CD8-positive, alpha-beta memory T cell (primary cell): ENCODE measurements at regions of chr16 and their contacts with region 1.

Region 1: GRCh38 chr16:28277537-28278388 is 14.6 kb upstream of the SBK1 start:
- DNase-seq: peak; percentile 75 to 89 (median 77)
- H3K4me3 ChIP-seq: peak overlapping the region; percentile 86
- H3K4me3 Mint-ChIP-seq: peak overlapping the region; percentile 79 to 91 (median 85)
- H3K27ac ChIP-seq: no peak overlapping the region
- H3K27ac Mint-ChIP-seq: peak overlapping the region; percentile 82 to 97 (median 91)
- H3K4me1 ChIP-seq: peaks cover 37% of the 10 kb centered on the region
- H3K4me1 Mint-ChIP-seq: peaks cover 28 to 44% (median 37%) of the 10 kb centered on the region in 3 donors
- H3K27me3 ChIP-seq: no peaks in the 10 kb centered on the region
- H3K27me3 Mint-ChIP-seq: no peaks in the 10 kb centered on the region

Region 2: GRCh38 chr16:28058839-28059589 is 218.7 kb before region 1 on chr16:
- CTCF ChIA-PET with region 1: no interaction called
- POLR2A ChIA-PET with region 1: no interaction called
- DNase-seq: no peak
- H3K4me3 ChIP-seq: no peak overlapping the region
- H3K4me3 Mint-ChIP-seq: no peak overlapping the region
- H3K27ac ChIP-seq: no peak overlapping the region
- H3K27ac Mint-ChIP-seq: no peak overlapping the region
- H3K4me1 ChIP-seq: no peaks in the 10 kb centered on the region
- H3K4me1 Mint-ChIP-seq: peaks cover 2 to 10% (median 3%) of the 10 kb centered on the region in 3 donors
- H3K27me3 ChIP-seq: peaks cover 14% of the 10 kb centered on the region
- H3K27me3 Mint-ChIP-seq: peaks cover 42 to 59% of the 10 kb centered on the region in 2 donors

Region 3: GRCh38 chr16:28218104-28218503 is 59.7 kb before region 1 on chr16:
- CTCF ChIA-PET with region 1: interaction called, 20 read pairs
- POLR2A ChIA-PET with region 1: interaction called, 7 read pairs
- DNase-seq: peak; percentile 40 to 79 (median 64)
- H3K4me3 ChIP-seq: no peak overlapping the region
- H3K4me3 Mint-ChIP-seq: peak overlapping the region in 1 of 7 donors; percentile 28
- H3K27ac ChIP-seq: no peak overlapping the region
- H3K27ac Mint-ChIP-seq: peak overlapping the region in 3 of 8 donors; percentile 48 to 72 (median 54)
- H3K4me1 ChIP-seq: no peaks in the 10 kb centered on the region
- H3K4me1 Mint-ChIP-seq: peaks cover 4 to 6% (median 5%) of the 10 kb centered on the region in 3 donors
- H3K27me3 ChIP-seq: no peaks in the 10 kb centered on the region
- H3K27me3 Mint-ChIP-seq: no peaks in the 10 kb centered on the region

Region 4: GRCh38 chr16:28291873-28292660 is 14.3 kb after region 1 on chr16 and contains the start of gene SBK1:
- CTCF ChIA-PET with region 1: interaction called, 19 read pairs
- POLR2A ChIA-PET with region 1: interaction called, 3 read pairs
- DNase-seq: peak; percentile 78 to 89 (median 87)
- H3K4me3 ChIP-seq: peak within 1 kb of the TSS; percentile 90
- H3K4me3 Mint-ChIP-seq: peak within 1 kb of the TSS; percentile 91 to 98 (median 96)
- H3K27ac ChIP-seq: peak within 1 kb of the TSS; percentile 64
- H3K27ac Mint-ChIP-seq: peak within 1 kb of the TSS; percentile 82 to 97 (median 94)
- H3K4me1 ChIP-seq: peaks cover 68% of the 10 kb centered on the region
- H3K4me1 Mint-ChIP-seq: peaks cover 61 to 72% (median 71%) of the 10 kb centered on the region in 3 donors
- H3K27me3 ChIP-seq: no peaks in the 10 kb centered on the region
- H3K27me3 Mint-ChIP-seq: no peaks in the 10 kb centered on the region
- total RNA-seq, gene SBK1: 3.9 to 4.1 TPM

Region 5: GRCh38 chr16:28309811-28310311 is 32.1 kb after region 1 on chr16:
- CTCF ChIA-PET with region 1: interaction called, 210 read pairs
- POLR2A ChIA-PET with region 1: interaction called, 20 read pairs
- DNase-seq: peak; percentile 77 to 95 (median 93)
- H3K4me3 ChIP-seq: peak overlapping the region; percentile 44
- H3K4me3 Mint-ChIP-seq: peak overlapping the region; percentile 51 to 90 (median 67)
- H3K27ac ChIP-seq: peak overlapping the region; percentile 36
- H3K27ac Mint-ChIP-seq: peak overlapping the region; percentile 94 to 98 (median 96)
- H3K4me1 ChIP-seq: peaks cover 59% of the 10 kb centered on the region
- H3K4me1 Mint-ChIP-seq: peaks cover 67 to 85% (median 70%) of the 10 kb centered on the region in 3 donors
- H3K27me3 ChIP-seq: no peaks in the 10 kb centered on the region
- H3K27me3 Mint-ChIP-seq: no peaks in the 10 kb centered on the region

Region 6: GRCh38 chr16:28326944-28327610 is 49.3 kb after region 1 on chr16:
- CTCF ChIA-PET with region 1: interaction called, 210 read pairs
- POLR2A ChIA-PET with region 1: no interaction called
- DNase-seq: peak; percentile 44 to 80 (median 59)
- H3K4me3 ChIP-seq: no peak overlapping the region
- H3K4me3 Mint-ChIP-seq: peak overlapping the region in 1 of 7 donors; percentile 19
- H3K27ac ChIP-seq: no peak overlapping the region
- H3K27ac Mint-ChIP-seq: peak overlapping the region in 6 of 8 donors; percentile 3 to 86 (median 34)
- H3K4me1 ChIP-seq: no peaks in the 10 kb centered on the region
- H3K4me1 Mint-ChIP-seq: peaks cover 6 to 8% (median 8%) of the 10 kb centered on the region in 3 donors
- H3K27me3 ChIP-seq: no peaks in the 10 kb centered on the region
- H3K27me3 Mint-ChIP-seq: no peaks in the 10 kb centered on the region